Right cardiac atrium (tissue), 5 donors: ENCODE measurements at regions of chr18 and their contacts with region 1.

Region 1: GRCh38 chr18:9683407-9684396 is 24.4 kb upstream of the RAB31 start:
- DNase-seq: peak in 1 of 3 donors; percentile 61
- ATAC-seq: peak; percentile 84 to 87
- H3K4me3 ChIP-seq: no peak overlapping the region
- H3K27ac ChIP-seq: peak overlapping the region; percentile 3
- H3K4me1 ChIP-seq: peaks cover 2% of the 10 kb centered on the region
- H3K27me3 ChIP-seq: no peaks in the 10 kb centered on the region

Region 2: GRCh38 chr18:9766076-9766481 is 82.4 kb after region 1 on chr18:
- intact Hi-C with region 1: loop called in 1 of 4 experiments (anchors 10 kb)
- DNase-seq: no peak
- ATAC-seq: peak; percentile 40 to 51
- H3K4me3 ChIP-seq: no peak overlapping the region
- H3K27ac ChIP-seq: no peak overlapping the region
- H3K4me1 ChIP-seq: no peaks in the 10 kb centered on the region
- H3K27me3 ChIP-seq: no peaks in the 10 kb centered on the region

Region 3: DNA sequence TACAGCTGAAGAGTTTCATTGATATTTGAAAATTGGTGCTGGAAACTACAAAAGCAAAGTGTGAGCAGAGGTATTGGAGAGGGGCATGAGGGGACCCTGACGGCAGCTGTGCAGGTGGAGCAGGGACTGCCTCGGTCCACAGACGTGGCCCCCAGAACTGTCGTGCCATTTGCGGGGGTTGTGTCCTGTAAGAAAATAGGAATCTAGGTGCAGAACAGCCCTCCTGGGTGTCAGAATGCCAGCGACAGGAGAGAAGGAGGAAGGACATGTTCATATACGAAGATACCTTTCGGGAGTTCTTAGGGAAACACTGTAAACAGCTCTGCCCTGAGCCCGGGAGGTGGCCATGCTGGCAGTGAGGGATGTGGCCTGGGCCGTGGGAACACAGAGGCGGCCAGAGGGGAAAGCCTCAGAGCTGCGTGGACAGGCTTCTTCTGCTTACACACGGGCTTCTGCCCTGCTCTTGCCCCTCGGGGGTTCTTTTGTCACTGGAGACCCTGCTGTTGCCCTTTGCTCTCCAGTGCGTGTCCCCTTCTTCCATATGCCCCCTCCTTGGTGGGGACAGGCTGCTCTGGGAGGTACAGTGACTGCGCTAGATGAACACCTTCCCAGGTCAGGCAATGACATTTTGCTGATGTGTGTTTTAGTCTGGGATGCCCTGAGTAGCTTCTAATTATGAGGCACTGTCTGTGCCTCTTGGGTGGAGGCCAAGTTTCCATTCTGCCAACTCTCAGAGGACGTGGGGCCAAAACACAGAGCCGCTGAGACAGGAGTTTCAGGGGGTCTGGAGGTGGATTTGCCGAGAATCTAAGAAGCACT is 120.2 kb after region 1 on chr18:
- intact Hi-C with region 1: no loop called
- DNase-seq: peak; percentile 44 to 76 (median 69)
- ATAC-seq: peak; percentile 63 to 71
- H3K4me3 ChIP-seq: no peak overlapping the region
- H3K27ac ChIP-seq: peak overlapping the region; percentile 95
- H3K4me1 ChIP-seq: peaks cover 5% of the 10 kb centered on the region
- H3K27me3 ChIP-seq: no peaks in the 10 kb centered on the region